MCF 10A (cell line): ENCODE measurements at regions of chr11 and their contacts with region 1.

Region 1: DNA sequence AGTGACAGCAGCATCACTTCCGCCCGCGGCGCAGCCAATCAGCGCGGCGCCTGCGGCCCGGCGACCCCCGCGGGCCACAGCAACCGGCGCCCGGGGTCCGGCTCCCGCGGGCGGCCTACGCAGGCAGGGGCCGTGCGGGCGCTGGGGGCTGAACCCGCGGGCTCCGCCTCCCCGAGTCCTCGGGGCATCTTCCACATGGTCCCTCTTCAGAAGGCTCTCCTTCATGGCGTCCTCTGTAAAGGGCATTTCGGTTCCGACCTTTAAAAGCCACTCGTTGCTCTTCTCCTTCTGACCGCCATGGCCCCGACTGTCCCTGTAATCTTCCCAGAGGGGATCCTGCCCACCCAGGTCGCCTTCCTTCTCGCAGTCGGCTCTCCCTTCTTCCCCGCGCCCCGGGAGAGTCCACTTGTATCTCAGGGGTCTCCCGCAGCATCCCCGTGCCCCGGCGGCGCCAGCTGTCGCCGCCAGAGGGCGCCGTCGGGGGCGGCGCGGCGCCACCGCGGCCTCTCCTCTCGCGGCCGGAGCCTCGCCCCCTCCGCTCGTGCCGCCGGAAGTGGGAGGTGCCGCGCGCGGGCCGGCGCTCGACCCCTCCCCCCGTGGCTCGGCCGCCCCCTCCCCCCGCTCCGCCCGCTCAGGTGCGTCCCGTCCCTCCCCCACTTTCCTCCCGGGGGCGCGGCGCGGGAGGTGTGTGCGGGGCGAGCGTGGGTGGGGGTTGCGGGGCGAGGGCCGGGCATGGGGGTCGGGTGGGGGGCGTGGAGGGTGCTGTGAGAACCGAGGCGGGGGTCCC is at the start of gene RNF214:
- DNase-seq: peak; percentile 68
- H3K4me3 Mint-ChIP-seq: peak within 1 kb of the TSS; percentile 94
- H3K27ac Mint-ChIP-seq: peak within 1 kb of the TSS; percentile 90
- H3K4me1 Mint-ChIP-seq: peaks cover 26% of the 10 kb centered on the region
- H3K27me3 Mint-ChIP-seq: no peaks in the 10 kb centered on the region
- CTCF ChIP-seq: peak; percentile 94
- total RNA-seq, gene RNF214: 23.3 TPM in 2 replicates

Region 2: DNA sequence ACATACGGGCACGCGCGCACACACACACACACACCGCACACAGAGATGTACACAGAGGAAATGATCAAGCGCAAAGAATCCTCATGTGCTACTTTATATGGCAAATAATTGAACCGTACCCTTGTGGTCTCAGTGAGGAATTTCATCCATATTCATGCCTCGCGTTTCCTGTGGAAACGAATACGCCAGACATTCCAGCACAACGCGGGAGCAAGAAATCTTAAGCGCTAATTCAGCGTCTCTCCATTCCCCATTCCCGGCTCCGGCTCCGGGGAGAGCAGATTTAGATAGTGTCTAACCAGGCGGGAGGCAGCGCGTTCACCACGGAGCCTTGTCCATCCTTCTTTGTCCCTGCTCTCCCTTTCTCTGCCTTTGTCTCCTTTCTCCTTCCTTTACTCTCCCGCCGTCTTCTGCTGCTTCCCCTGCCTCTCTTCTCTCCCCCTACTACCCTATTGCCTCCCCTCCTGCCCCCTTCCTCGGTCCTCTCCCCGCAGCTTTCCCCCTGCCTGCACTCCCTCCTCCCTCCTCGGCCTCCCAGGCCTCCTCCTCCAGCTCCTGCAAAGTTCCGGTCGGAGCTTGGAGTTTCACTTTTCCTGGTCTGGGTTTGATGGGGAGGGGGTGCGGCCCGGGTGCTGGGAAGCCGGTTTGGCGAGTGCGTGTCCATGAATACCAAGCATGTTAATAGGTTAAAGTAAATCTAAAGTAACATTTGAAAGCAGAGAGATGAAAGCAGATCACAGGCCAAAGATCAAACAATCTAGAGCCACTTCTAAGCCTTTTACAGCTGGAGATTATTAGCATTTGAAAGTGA is 1038.8 kb before region 1 on chr11:
- CTCF ChIA-PET with region 1: no interaction called
- POLR2A ChIA-PET with region 1: no interaction called
- intact Hi-C with region 1: no loop called
- DNase-seq: no peak
- H3K4me3 Mint-ChIP-seq: no peak overlapping the region
- H3K27ac Mint-ChIP-seq: no peak overlapping the region
- H3K4me1 Mint-ChIP-seq: no peaks in the 10 kb centered on the region
- H3K27me3 Mint-ChIP-seq: no peaks in the 10 kb centered on the region
- CTCF ChIP-seq: no peak

Region 3: GRCh38 chr11:117178210-117179034 is 53.9 kb before region 1 on chr11 and contains the start of gene SIDT2:
- CTCF ChIA-PET with region 1: interaction called, 34 read pairs
- POLR2A ChIA-PET with region 1: interaction called, 23 read pairs
- intact Hi-C with region 1: no loop called
- DNase-seq: peak; percentile 91
- H3K4me3 Mint-ChIP-seq: peak within 1 kb of the TSS; percentile 90
- H3K27ac Mint-ChIP-seq: peak within 1 kb of the TSS; percentile 87
- H3K4me1 Mint-ChIP-seq: peaks cover 11% of the 10 kb centered on the region
- H3K27me3 Mint-ChIP-seq: no peaks in the 10 kb centered on the region
- CTCF ChIP-seq: no peak
- total RNA-seq, gene SIDT2: 17.5 and 18.4 TPM in 2 replicates

Region 4: GRCh38 chr11:117279711-117280376 is 47.6 kb after region 1 on chr11:
- CTCF ChIA-PET with region 1: no interaction called
- POLR2A ChIA-PET with region 1: no interaction called
- intact Hi-C with region 1: no loop called
- DNase-seq: no peak
- H3K4me3 Mint-ChIP-seq: no peak overlapping the region
- H3K27ac Mint-ChIP-seq: no peak overlapping the region
- H3K4me1 Mint-ChIP-seq: peaks cover 11% of the 10 kb centered on the region
- H3K27me3 Mint-ChIP-seq: no peaks in the 10 kb centered on the region
- CTCF ChIP-seq: no peak

Region 5: DNA sequence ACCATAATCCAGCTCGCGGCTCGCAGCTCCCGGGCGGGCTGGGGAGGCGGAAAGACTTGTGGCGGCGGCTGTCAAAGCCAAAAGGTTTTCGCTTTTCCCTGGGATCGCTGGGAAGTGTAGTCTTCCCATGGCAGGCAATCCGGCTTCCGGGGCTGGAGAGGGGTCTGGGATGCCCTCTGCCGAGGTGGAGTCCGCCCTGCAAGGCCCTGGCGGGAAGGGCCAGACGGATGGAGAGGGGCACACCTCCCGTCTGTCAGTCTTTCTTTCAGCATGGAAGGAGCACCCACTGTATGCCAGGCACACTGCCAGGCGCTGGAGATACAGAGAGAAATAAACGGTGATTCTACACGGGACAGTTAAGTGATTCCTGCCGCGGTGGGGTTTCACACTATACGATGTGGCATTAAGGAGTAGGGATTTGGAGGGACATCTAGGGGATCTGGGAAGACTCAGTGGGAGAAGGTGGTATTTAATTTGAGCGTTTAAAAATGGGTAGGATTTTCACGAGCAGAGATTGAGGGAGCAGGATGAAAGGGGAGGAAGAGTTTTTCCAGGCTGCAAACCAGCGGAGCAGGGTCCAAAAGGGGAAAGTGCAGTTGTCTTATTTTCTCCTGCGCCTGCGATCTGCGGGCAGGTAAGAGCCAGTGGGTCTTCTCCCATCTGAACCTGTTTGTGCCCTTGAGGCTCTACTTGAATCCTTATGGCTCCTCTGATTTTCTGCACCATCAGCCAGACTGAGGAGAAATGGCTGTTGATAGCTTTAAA is 84.1 kb after region 1 on chr11 and contains the start of gene BACE1:
- CTCF ChIA-PET with region 1: interaction called, 8 read pairs
- POLR2A ChIA-PET with region 1: interaction called, 3 read pairs
- intact Hi-C with region 1: loop called (anchors 2 kb)
- DNase-seq: peak; percentile 85
- H3K4me3 Mint-ChIP-seq: peak within 1 kb of the TSS; percentile 83
- H3K27ac Mint-ChIP-seq: peak within 1 kb of the TSS; percentile 23
- H3K4me1 Mint-ChIP-seq: peaks cover 13% of the 10 kb centered on the region
- H3K27me3 Mint-ChIP-seq: no peaks in the 10 kb centered on the region
- CTCF ChIP-seq: no peak
- total RNA-seq, gene BACE1: 15.8 and 18.1 TPM in 2 replicates

Region 6: GRCh38 chr11:117384041-117384440 is 151.8 kb after region 1 on chr11:
- CTCF ChIA-PET with region 1: no interaction called
- POLR2A ChIA-PET with region 1: no interaction called
- intact Hi-C with region 1: loop called (anchors 10 kb)
- DNase-seq: peak; percentile 49
- H3K4me3 Mint-ChIP-seq: no peak overlapping the region
- H3K27ac Mint-ChIP-seq: no peak overlapping the region
- H3K4me1 Mint-ChIP-seq: peaks cover 5% of the 10 kb centered on the region
- H3K27me3 Mint-ChIP-seq: no peaks in the 10 kb centered on the region
- CTCF ChIP-seq: no peak

Region 7: GRCh38 chr11:117817368-117818040 is 585.2 kb after region 1 on chr11:
- CTCF ChIA-PET with region 1: no interaction called
- POLR2A ChIA-PET with region 1: no interaction called
- intact Hi-C with region 1: loop called (anchors 10 kb)
- DNase-seq: peak; percentile 70
- H3K4me3 Mint-ChIP-seq: no peak overlapping the region
- H3K27ac Mint-ChIP-seq: peak overlapping the region; percentile 29
- H3K4me1 Mint-ChIP-seq: peaks cover 11% of the 10 kb centered on the region
- H3K27me3 Mint-ChIP-seq: no peaks in the 10 kb centered on the region
- CTCF ChIP-seq: peak; percentile 94